ENCODE measurements at regions of chr12 and their contacts with region 1.

Region 1: DNA sequence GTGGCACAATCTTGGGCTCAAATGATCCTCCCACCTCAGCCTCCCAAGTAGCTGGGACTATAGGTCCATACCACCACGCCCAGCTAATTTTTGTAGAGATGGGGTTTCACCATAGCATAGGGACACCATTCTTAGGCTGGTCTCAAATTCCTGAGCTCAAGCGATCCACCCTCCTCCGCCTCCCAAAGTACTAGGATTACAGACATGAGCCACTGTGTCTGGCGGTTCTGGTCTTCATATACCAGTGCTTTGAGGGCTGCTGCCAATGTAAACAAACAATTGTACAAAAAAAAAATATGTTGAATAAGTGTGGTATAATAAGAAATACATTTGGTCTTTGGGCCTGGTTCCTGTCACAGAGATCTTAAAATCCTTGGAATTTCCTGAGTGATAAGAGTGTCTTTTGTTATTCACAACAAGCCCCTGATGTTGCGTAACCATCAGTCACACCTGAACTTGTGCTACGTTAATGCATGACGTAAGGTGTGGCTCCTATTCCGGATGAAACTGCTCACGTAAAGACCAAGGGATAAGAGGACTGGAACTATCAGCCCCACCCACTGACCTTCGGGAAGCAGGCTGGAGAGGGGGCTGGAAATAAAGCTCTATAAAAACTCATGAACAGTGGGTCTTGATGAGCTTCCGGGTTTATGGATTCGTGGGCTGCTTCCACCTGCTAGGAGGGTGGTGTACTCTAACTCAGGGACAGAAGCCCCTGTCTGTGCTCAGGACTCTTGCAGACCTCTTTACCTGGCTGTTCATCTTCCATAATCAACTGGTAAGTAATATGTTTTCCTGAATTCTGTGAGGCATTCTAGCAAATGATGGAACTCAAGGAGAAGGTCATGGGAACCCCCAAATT is 16.5 kb upstream of the RIMKLB start:
- DNase-seq: no peak
- ATAC-seq: peak; percentile 55
- H3K4me3 Mint-ChIP-seq: peak overlapping the region; percentile 64
- H3K27ac Mint-ChIP-seq: peak overlapping the region; percentile 93
- H3K4me1 Mint-ChIP-seq: peaks cover 30% of the 10 kb centered on the region
- H3K27me3 Mint-ChIP-seq: no peaks in the 10 kb centered on the region
- CTCF ChIP-seq: no peak

Region 2: DNA sequence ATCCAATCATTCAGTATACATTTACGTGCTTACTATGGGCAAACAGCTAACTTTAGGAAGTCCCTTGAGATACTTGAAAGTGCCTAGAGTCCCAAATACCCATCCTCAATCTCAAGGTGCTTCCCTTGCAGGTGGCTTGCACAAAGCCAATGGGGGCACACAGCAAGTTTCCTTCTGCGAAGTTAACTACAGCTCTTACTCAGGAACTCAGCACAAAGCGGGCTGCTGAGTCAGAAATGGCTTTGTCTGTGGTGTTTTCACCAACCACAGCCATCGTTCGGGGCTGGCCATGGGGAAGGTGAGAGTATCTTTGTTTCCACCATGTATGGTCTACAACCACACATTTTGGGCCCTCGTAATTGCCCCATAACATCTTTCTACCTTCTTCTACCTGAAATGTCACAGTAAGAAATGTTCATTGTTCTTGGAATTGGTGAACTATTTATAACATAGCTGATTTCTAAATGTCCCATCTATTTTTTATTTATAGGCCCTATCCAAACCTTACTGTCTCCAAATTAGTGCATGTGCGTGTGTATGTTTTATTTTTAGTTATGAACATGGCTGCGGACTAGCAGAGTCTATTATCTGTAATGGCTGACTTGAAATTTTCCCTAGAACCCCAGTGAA is 32.6 kb before region 1 on chr12:
- CTCF ChIA-PET with region 1: no interaction called
- POLR2A ChIA-PET with region 1: no interaction called
- DNase-seq: no peak
- ATAC-seq: no peak
- H3K4me3 Mint-ChIP-seq: no peak overlapping the region
- H3K27ac Mint-ChIP-seq: no peak overlapping the region
- H3K4me1 Mint-ChIP-seq: peaks cover 20% of the 10 kb centered on the region
- H3K27me3 Mint-ChIP-seq: no peaks in the 10 kb centered on the region
- CTCF ChIP-seq: no peak

Region 3: GRCh38 chr12:8734873-8735381 is 53.7 kb after region 1 on chr12:
- CTCF ChIA-PET with region 1: interaction called, 13 read pairs
- POLR2A ChIA-PET with region 1: no interaction called
- DNase-seq: no peak
- ATAC-seq: no peak
- H3K4me3 Mint-ChIP-seq: no peak overlapping the region
- H3K27ac Mint-ChIP-seq: no peak overlapping the region
- H3K4me1 Mint-ChIP-seq: peaks cover 46% of the 10 kb centered on the region
- H3K27me3 Mint-ChIP-seq: no peaks in the 10 kb centered on the region
- CTCF ChIP-seq: no peak

Region 4: GRCh38 chr12:8828540-8829518 is 147.6 kb after region 1 on chr12:
- CTCF ChIA-PET with region 1: interaction called, 65 read pairs
- POLR2A ChIA-PET with region 1: interaction called, 6 read pairs
- DNase-seq: no peak
- ATAC-seq: peak; percentile 12
- H3K4me3 Mint-ChIP-seq: no peak overlapping the region
- H3K27ac Mint-ChIP-seq: peak overlapping the region; percentile 51
- H3K4me1 Mint-ChIP-seq: peaks cover 62% of the 10 kb centered on the region
- H3K27me3 Mint-ChIP-seq: no peaks in the 10 kb centered on the region; the same call in 1 of the 2 replicates
- CTCF ChIP-seq: no peak

Measured in WTC11 (cell line).